ENCODE measurements at regions of chr2 and their contacts with region 1.

Region 1: GRCh38 chr2:80326214-80326613 is 21.7 kb upstream of the LRRTM1 start:
- DNase-seq: peak in 2 of 4 experiments; percentile 12 to 48
- ATAC-seq: peak; percentile 74
- H3K4me3 ChIP-seq: no peak overlapping the region
- H3K27ac ChIP-seq: no peak overlapping the region
- H3K4me1 ChIP-seq: peaks cover 0 to 6% of the 10 kb centered on the region in 2 experiments; a peak in 3 of 5 replicates
- H3K27me3 ChIP-seq: peaks cover 6 to 13% of the 10 kb centered on the region in 2 experiments; a peak in 3 of 5 replicates
- CTCF ChIP-seq: peak; percentile 35 to 63 (median 39); a peak in 4 of 6 replicates
- EP300 ChIP-seq: no peak
- POLR2A ChIP-seq: no peak
- RAD21 ChIP-seq: peak; percentile 76 to 87

Region 2: GRCh38 chr2:79935771-79936657 is 390.2 kb before region 1 on chr2:
- CTCF ChIA-PET with region 1: no interaction called
- POLR2A ChIA-PET with region 1: no interaction called
- in situ Hi-C with region 1: no loop called
- intact Hi-C with region 1: loop called (anchors 10 kb)
- DNase-seq: peak; percentile 19 to 64 (median 22)
- ATAC-seq: peak; percentile 93
- H3K4me3 ChIP-seq: no peak overlapping the region
- H3K27ac ChIP-seq: no peak overlapping the region
- H3K4me1 ChIP-seq: no peaks in the 10 kb centered on the region
- H3K27me3 ChIP-seq: no peaks in the 10 kb centered on the region
- CTCF ChIP-seq: peak; percentile 57 to 75 (median 71)
- EP300 ChIP-seq: no peak
- POLR2A ChIP-seq: no peak
- RAD21 ChIP-seq: peak; percentile 62 to 70

Region 3: GRCh38 chr2:80007777-80008503 is 318.3 kb before region 1 on chr2:
- CTCF ChIA-PET with region 1: no interaction called
- POLR2A ChIA-PET with region 1: no interaction called
- in situ Hi-C with region 1: no loop called
- intact Hi-C with region 1: no loop called
- DNase-seq: no peak
- ATAC-seq: no peak
- H3K4me3 ChIP-seq: no peak overlapping the region
- H3K27ac ChIP-seq: no peak overlapping the region
- H3K4me1 ChIP-seq: no peaks in the 10 kb centered on the region
- H3K27me3 ChIP-seq: no peaks in the 10 kb centered on the region
- CTCF ChIP-seq: no peak
- EP300 ChIP-seq: no peak
- POLR2A ChIP-seq: no peak
- RAD21 ChIP-seq: no peak

Region 4: DNA sequence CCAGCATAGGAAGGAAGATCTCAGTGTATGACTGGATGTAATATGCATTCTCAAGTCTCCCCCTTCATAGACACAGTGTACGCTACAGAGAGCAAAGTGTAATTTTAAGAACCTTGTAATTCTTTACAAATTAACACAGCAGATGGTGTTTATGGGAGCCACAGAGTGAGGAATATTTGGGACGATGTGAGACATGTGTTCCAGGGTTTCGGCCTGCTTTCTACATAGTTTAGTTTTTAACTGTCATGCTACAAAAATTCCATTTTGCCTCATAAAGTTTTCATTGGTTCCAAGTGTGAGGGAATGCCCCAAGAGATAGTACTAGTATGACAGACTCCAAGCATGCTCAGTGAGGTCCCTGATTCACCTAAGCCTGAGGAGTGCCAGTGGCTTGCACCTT is 54.5 kb after region 1 on chr2:
- CTCF ChIA-PET with region 1: no interaction called
- POLR2A ChIA-PET with region 1: no interaction called
- in situ Hi-C with region 1: no loop called
- intact Hi-C with region 1: loop called (anchors 5 kb)
- DNase-seq: no peak
- ATAC-seq: peak; percentile 58
- H3K4me3 ChIP-seq: no peak overlapping the region
- H3K27ac ChIP-seq: no peak overlapping the region
- H3K4me1 ChIP-seq: peaks cover 0 to 16% of the 10 kb centered on the region in 2 experiments; a peak in 2 of 5 replicates
- H3K27me3 ChIP-seq: no peaks in the 10 kb centered on the region
- CTCF ChIP-seq: no peak
- EP300 ChIP-seq: no peak
- POLR2A ChIP-seq: no peak
- RAD21 ChIP-seq: no peak

Region 5: DNA sequence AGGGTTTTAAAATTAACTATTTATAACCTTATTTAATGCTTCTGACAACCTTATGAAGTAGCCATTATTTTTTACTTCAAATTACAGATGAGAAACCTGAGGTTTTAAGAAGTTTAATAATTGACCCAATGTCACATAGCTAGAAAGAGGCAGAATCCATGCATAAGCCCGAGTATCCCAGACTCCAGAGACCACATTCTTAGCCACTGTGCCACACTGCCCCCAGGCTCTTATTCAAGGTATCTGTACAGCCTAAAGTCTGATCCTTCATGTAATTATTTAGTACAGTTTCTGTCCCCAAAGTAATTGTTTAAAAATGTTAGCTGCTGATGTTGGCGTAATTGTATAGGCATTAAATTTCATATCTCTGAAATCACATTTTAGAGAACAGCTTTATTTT is 103.0 kb after region 1 on chr2:
- CTCF ChIA-PET with region 1: interaction called, 5 read pairs
- POLR2A ChIA-PET with region 1: no interaction called
- in situ Hi-C with region 1: loop called (anchors 5 kb)
- intact Hi-C with region 1: loop called (anchors 1 kb)
- DNase-seq: peak in 1 of 4 experiments; percentile 30
- ATAC-seq: peak; percentile 74
- H3K4me3 ChIP-seq: no peak overlapping the region
- H3K27ac ChIP-seq: no peak overlapping the region
- H3K4me1 ChIP-seq: no peaks in the 10 kb centered on the region
- H3K27me3 ChIP-seq: no peaks in the 10 kb centered on the region
- CTCF ChIP-seq: peak; percentile 18 to 40 (median 24); a peak in 3 of 6 replicates
- EP300 ChIP-seq: no peak
- POLR2A ChIP-seq: no peak
- RAD21 ChIP-seq: peak; percentile 35 to 64

Region 6: DNA sequence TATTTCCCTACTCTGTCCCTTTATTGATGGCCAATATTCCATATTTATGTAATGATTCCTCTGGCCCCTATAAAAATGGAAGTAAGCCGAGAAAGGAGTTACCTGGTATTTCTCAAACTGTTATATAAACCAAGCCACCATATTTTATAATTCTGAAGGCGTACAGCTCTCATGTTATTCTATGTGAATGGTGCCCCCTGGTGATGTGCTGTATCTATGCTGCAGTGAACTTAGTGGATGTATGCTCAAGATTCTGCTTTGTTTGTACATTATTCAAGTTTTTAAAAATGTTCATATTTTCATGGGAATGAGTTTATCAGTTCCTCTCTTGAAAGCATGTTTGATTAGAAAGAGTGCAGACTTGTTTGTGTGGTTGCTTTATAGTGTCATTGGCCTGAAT is 172.9 kb after region 1 on chr2:
- CTCF ChIA-PET with region 1: interaction called, 5 read pairs
- POLR2A ChIA-PET with region 1: interaction called, 5 read pairs
- in situ Hi-C with region 1: no loop called
- intact Hi-C with region 1: loop called (anchors 1 kb)
- DNase-seq: peak in 2 of 4 experiments; percentile 9 to 55
- ATAC-seq: peak; percentile 83
- H3K4me3 ChIP-seq: no peak overlapping the region
- H3K27ac ChIP-seq: no peak overlapping the region
- H3K4me1 ChIP-seq: no peaks in the 10 kb centered on the region
- H3K27me3 ChIP-seq: no peaks in the 10 kb centered on the region
- CTCF ChIP-seq: peak; percentile 45 to 69 (median 56); a peak in 5 of 6 replicates
- EP300 ChIP-seq: no peak
- POLR2A ChIP-seq: no peak
- RAD21 ChIP-seq: peak; percentile 81 to 85

Region 7: DNA sequence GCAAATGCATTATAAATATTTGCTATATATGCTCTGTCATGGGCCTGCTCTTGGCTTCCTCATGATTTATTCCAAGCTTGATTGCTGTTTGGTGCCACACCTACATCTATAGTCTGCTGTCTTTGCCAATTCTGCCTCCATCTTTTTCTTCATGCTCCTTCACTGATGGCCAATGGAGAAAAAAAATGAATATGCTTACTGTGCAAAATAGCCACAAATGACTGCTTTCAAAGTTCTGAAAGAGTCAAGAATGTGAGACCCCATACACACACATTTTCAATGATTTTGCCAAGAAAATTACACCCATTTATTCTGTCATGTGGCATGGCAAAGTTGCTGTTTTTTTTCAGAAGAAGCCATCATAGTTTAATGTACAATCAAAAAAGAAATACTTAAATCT is 283.9 kb after region 1 on chr2:
- CTCF ChIA-PET with region 1: no interaction called
- POLR2A ChIA-PET with region 1: no interaction called
- in situ Hi-C with region 1: no loop called
- intact Hi-C with region 1: no loop called
- DNase-seq: no peak
- ATAC-seq: no peak
- H3K4me3 ChIP-seq: no peak overlapping the region
- H3K27ac ChIP-seq: no peak overlapping the region
- H3K4me1 ChIP-seq: no peaks in the 10 kb centered on the region
- H3K27me3 ChIP-seq: no peaks in the 10 kb centered on the region
- CTCF ChIP-seq: no peak
- EP300 ChIP-seq: no peak
- POLR2A ChIP-seq: no peak
- RAD21 ChIP-seq: no peak

Region 8: DNA sequence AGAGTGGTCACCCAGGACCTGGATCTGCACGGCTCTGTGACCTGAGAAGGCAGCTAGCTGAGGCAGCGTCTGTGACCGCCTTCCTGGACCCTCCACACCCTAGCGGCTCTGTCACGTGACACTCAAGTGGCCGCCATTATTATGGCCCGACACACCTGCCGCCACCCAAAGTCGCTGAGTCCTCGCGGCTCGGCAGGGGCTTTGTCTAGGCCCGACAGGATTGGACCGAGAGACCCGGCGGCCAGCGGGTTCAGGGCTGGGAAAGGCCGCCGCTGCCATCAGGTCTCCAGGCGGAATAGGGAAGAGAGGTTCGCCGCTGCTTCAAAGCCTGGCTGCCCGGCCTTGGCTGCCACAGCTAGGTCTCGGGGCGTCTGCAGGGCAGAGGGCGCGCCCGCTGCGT is 1140.9 kb after region 1 on chr2:
- CTCF ChIA-PET with region 1: no interaction called
- POLR2A ChIA-PET with region 1: no interaction called
- in situ Hi-C with region 1: no loop called
- intact Hi-C with region 1: no loop called
- DNase-seq: peak in 1 of 4 experiments; percentile 3
- ATAC-seq: no peak
- H3K4me3 ChIP-seq: no peak overlapping the region
- H3K27ac ChIP-seq: no peak overlapping the region
- H3K4me1 ChIP-seq: no peaks in the 10 kb centered on the region
- H3K27me3 ChIP-seq: no peaks in the 10 kb centered on the region
- CTCF ChIP-seq: no peak
- EP300 ChIP-seq: no peak
- POLR2A ChIP-seq: no peak
- RAD21 ChIP-seq: no peak

Measured in K562 (cell line).